ENCODE measurements at regions of chr7 and their contacts with region 1.

Region 1: GRCh38 chr7:104883718-104884452 is 130.1 kb upstream of the KMT2E start:
- DNase-seq: peak; percentile 46 to 84 (median 77)
- ATAC-seq: peak; percentile 84
- H3K4me3 ChIP-seq: no peak overlapping the region
- H3K4me3 Mint-ChIP-seq: no peak overlapping the region
- H3K27ac ChIP-seq: no peak overlapping the region
- H3K27ac Mint-ChIP-seq: no peak overlapping the region
- H3K4me1 ChIP-seq: no peaks in the 10 kb centered on the region
- H3K4me1 Mint-ChIP-seq: peaks cover 5% of the 10 kb centered on the region
- H3K27me3 ChIP-seq: no peaks in the 10 kb centered on the region
- H3K27me3 Mint-ChIP-seq: no peaks in the 10 kb centered on the region
- CTCF ChIP-seq: peak; percentile 88

Region 2: DNA sequence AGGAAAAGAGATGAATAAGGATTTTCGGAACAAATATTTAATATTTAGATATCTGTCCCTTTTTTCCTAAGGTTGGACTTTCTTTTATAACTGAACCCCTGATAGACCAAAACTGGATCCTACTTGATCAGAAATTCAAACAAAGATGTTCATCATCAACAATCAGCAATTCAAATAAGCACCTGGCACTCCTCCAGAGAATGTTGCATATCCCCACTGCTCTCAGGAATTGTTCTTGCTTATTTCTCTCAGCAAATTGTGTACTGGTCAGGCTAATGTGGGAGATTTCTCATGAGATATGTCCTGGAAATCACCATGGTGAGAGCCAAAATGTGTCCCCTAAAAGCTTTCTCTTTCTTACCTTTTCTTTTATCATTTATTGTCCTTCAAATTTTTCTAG is 595.7 kb before region 1 on chr7:
- CTCF ChIA-PET with region 1: no interaction called
- POLR2A ChIA-PET with region 1: no interaction called
- intact Hi-C with region 1: no loop called
- DNase-seq: no peak
- ATAC-seq: no peak
- H3K4me3 ChIP-seq: no peak overlapping the region
- H3K4me3 Mint-ChIP-seq: no peak overlapping the region
- H3K27ac ChIP-seq: no peak overlapping the region
- H3K27ac Mint-ChIP-seq: no peak overlapping the region
- H3K4me1 ChIP-seq: no peaks in the 10 kb centered on the region
- H3K4me1 Mint-ChIP-seq: no peaks in the 10 kb centered on the region
- H3K27me3 ChIP-seq: no peaks in the 10 kb centered on the region
- H3K27me3 Mint-ChIP-seq: peaks cover 9% of the 10 kb centered on the region
- CTCF ChIP-seq: no peak

Region 3: GRCh38 chr7:104779888-104780287 is 104.0 kb before region 1 on chr7:
- CTCF ChIA-PET with region 1: no interaction called
- POLR2A ChIA-PET with region 1: no interaction called
- intact Hi-C with region 1: no loop called
- DNase-seq: no peak
- ATAC-seq: no peak
- H3K4me3 ChIP-seq: no peak overlapping the region
- H3K4me3 Mint-ChIP-seq: no peak overlapping the region
- H3K27ac ChIP-seq: no peak overlapping the region
- H3K27ac Mint-ChIP-seq: no peak overlapping the region
- H3K4me1 ChIP-seq: no peaks in the 10 kb centered on the region
- H3K4me1 Mint-ChIP-seq: no peaks in the 10 kb centered on the region
- H3K27me3 ChIP-seq: no peaks in the 10 kb centered on the region
- H3K27me3 Mint-ChIP-seq: no peaks in the 10 kb centered on the region
- CTCF ChIP-seq: no peak

Region 4: GRCh38 chr7:104873346-104873849 is 10.5 kb before region 1 on chr7:
- CTCF ChIA-PET with region 1: interaction called, 23 read pairs
- POLR2A ChIA-PET with region 1: no interaction called
- intact Hi-C with region 1: no loop called
- DNase-seq: no peak
- ATAC-seq: no peak
- H3K4me3 ChIP-seq: no peak overlapping the region
- H3K4me3 Mint-ChIP-seq: no peak overlapping the region
- H3K27ac ChIP-seq: no peak overlapping the region
- H3K27ac Mint-ChIP-seq: no peak overlapping the region
- H3K4me1 ChIP-seq: no peaks in the 10 kb centered on the region
- H3K4me1 Mint-ChIP-seq: peaks cover 2% of the 10 kb centered on the region
- H3K27me3 ChIP-seq: no peaks in the 10 kb centered on the region
- H3K27me3 Mint-ChIP-seq: peaks cover 4% of the 10 kb centered on the region
- CTCF ChIP-seq: no peak

Region 5: GRCh38 chr7:104900525-104901239 is 16.8 kb after region 1 on chr7:
- CTCF ChIA-PET with region 1: interaction called, 52 read pairs
- POLR2A ChIA-PET with region 1: no interaction called
- intact Hi-C with region 1: no loop called
- DNase-seq: no peak
- ATAC-seq: no peak
- H3K4me3 ChIP-seq: no peak overlapping the region
- H3K4me3 Mint-ChIP-seq: no peak overlapping the region
- H3K27ac ChIP-seq: no peak overlapping the region
- H3K27ac Mint-ChIP-seq: no peak overlapping the region
- H3K4me1 ChIP-seq: no peaks in the 10 kb centered on the region
- H3K4me1 Mint-ChIP-seq: peaks cover 4% of the 10 kb centered on the region
- H3K27me3 ChIP-seq: no peaks in the 10 kb centered on the region
- H3K27me3 Mint-ChIP-seq: peaks cover 6% of the 10 kb centered on the region
- CTCF ChIP-seq: no peak

Region 6: GRCh38 chr7:104914421-104914820 is 30.5 kb after region 1 on chr7:
- CTCF ChIA-PET with region 1: interaction called, 166 read pairs
- POLR2A ChIA-PET with region 1: interaction called, 3 read pairs
- intact Hi-C with region 1: loop called (anchors 1 kb)
- DNase-seq: no peak
- ATAC-seq: no peak
- H3K4me3 ChIP-seq: no peak overlapping the region
- H3K4me3 Mint-ChIP-seq: no peak overlapping the region
- H3K27ac ChIP-seq: no peak overlapping the region
- H3K27ac Mint-ChIP-seq: peak overlapping the region; percentile 58
- H3K4me1 ChIP-seq: no peaks in the 10 kb centered on the region
- H3K4me1 Mint-ChIP-seq: no peaks in the 10 kb centered on the region
- H3K27me3 ChIP-seq: no peaks in the 10 kb centered on the region
- H3K27me3 Mint-ChIP-seq: peaks cover 2% of the 10 kb centered on the region
- CTCF ChIP-seq: no peak

Region 7: DNA sequence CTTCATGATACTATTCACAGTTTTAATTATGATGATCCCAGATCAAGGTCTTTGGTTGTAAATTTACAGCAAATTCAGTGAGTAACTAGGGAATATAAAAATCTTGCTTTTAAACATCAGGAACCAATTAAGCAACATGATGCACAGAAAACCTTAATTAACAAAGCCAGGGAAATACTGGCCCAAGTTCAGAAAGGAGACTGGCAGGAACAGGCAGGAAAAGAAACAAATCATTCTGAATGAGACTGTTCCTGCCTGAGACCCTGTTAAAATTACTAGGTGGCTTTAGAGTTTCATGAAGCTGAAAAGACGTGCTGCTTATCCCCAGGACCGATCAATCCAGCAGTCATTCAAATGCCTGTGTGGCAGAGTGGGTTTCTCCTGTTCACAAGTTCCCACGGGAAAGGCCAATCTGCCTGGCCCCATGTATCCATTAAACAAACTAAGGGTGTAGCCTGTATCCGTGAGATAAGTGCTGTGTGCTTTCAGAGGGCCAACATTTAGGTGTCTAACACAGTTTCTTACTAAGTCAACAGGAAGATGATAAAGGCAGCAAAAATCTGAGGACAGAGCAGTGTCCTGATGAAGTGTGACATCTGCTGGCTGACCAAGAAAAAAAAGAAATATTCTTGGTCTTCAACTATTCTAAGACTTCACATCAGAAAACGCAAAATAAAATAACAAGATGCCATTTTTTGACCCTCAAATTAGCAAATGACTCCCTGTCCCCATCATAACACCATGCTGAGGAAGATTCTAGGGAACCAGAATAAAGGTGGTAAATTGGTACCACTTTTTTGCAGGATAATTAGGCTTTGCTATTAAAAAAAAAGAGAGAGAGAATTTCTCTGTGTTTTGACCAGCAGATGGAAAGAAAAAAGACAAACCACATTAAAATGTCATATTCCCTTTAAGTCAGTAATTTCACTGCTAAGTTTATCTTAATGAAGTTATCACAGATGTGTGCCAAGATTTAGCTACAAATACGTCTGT is 604.0 kb after region 1 on chr7:
- CTCF ChIA-PET with region 1: no interaction called
- POLR2A ChIA-PET with region 1: no interaction called
- intact Hi-C with region 1: loop called in 1 of 2 experiments (anchors 10 kb)
- DNase-seq: peak in 3 of 9 experiments; percentile 39 to 53 (median 50)
- ATAC-seq: no peak
- H3K4me3 ChIP-seq: no peak overlapping the region
- H3K4me3 Mint-ChIP-seq: no peak overlapping the region
- H3K27ac ChIP-seq: no peak overlapping the region
- H3K27ac Mint-ChIP-seq: no peak overlapping the region
- H3K4me1 ChIP-seq: no peaks in the 10 kb centered on the region
- H3K4me1 Mint-ChIP-seq: peaks cover 4% of the 10 kb centered on the region
- H3K27me3 ChIP-seq: no peaks in the 10 kb centered on the region
- H3K27me3 Mint-ChIP-seq: no peaks in the 10 kb centered on the region
- CTCF ChIP-seq: peak; percentile 22